Vagina (tissue), 2 donors: ENCODE measurements at regions of chr6 and their contacts with region 1.

Region 1: GRCh38 chr6:32796848-32797776 is 19.7 kb downstream of the HLA-DOB start:
- DNase-seq: no peak
- H3K4me3 ChIP-seq: no peak overlapping the region
- H3K27ac ChIP-seq: no peak overlapping the region
- H3K4me1 ChIP-seq: no peaks in the 10 kb centered on the region
- H3K27me3 ChIP-seq: no peaks in the 10 kb centered on the region
- CTCF ChIP-seq: peak; percentile 83 to 97 (median 87)
- POLR2A ChIP-seq: no peak

Region 2: GRCh38 chr6:32413427-32414047 is 383.6 kb before region 1 on chr6:
- intact Hi-C with region 1: loop called (anchors 10 kb)
- DNase-seq: no peak
- H3K4me3 ChIP-seq: no peak overlapping the region
- H3K27ac ChIP-seq: no peak overlapping the region
- H3K4me1 ChIP-seq: no peaks in the 10 kb centered on the region
- H3K27me3 ChIP-seq: no peaks in the 10 kb centered on the region
- CTCF ChIP-seq: peak; percentile 84 to 90 (median 89)
- POLR2A ChIP-seq: no peak

Region 3: GRCh38 chr6:32700391-32701040 is 96.6 kb before region 1 on chr6:
- intact Hi-C with region 1: loop called (anchors 10 kb)
- DNase-seq: no peak
- H3K4me3 ChIP-seq: no peak overlapping the region
- H3K27ac ChIP-seq: no peak overlapping the region
- H3K4me1 ChIP-seq: no peaks in the 10 kb centered on the region
- H3K27me3 ChIP-seq: no peaks in the 10 kb centered on the region
- CTCF ChIP-seq: peak in 2 of 3 experiments; percentile 45 to 59
- POLR2A ChIP-seq: no peak

Region 4: DNA sequence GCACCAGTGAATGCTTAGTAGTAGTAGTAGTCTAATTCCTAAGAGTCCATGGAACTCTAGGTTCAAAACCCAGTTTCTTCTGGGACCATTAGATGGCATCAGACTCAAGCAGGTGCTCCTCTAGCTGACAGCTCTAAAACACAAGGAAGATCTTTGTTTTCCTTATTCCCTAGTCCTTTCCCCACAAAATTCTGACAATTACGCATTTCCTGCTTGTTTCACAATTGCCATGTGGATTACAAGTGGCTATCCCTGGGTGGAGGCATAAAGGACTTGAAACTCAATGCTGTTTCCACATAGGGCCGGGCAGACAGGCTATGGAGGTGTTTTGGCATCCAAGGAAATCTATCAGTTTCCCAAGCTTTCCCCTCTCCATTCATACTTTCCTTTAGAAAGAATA is 28.9 kb after region 1 on chr6:
- intact Hi-C with region 1: loop called (anchors 1 kb)
- DNase-seq: no peak
- H3K4me3 ChIP-seq: no peak overlapping the region
- H3K27ac ChIP-seq: no peak overlapping the region
- H3K4me1 ChIP-seq: no peaks in the 10 kb centered on the region
- H3K27me3 ChIP-seq: no peaks in the 10 kb centered on the region
- CTCF ChIP-seq: peak in 2 of 3 experiments; percentile 9 to 47
- POLR2A ChIP-seq: no peak

Region 5: DNA sequence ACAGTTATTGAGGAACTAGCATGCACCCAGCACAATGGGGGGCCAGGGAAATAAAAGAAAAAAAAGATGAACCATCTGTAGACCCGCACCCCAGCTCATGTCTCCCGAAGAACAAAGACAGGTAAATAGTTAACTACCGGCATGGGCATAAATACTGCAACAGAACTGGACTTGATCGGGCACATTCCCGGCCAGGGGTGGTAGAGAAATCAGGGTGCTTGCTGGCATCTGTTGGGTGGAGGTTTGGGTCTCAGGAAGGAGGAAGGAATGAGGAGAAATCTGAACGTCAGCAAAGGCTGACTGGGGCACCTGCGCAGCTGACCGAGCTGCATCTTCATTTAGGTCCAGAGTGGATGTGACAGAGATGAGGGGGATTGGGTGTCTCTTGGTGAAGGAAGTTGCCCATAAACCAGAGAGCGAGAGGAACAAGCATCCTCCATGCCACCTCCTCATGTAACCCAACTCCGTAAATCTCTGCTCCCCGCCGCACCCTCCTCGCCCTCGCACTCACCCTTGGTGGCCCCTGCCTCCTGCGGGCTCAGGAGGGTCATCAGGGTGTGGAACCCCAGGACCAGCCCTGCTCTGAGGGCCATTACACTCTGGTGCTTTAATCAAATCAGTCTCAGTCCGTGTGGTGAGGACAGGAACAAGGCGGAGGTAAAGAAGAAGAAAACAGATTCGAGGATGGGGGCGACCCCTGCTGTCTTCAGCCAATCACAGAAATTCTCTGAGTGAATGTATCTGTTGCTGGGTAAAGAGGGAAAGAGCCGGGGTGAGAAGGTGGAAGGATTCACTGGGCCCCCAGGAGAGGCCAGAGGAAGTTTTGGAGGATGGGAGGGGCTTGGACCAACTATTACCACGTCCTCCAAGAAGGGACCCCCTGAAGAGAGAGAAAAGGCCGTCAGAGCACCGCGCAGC is 212.1 kb after region 1 on chr6 and contains the start of gene HLA-DOA:
- intact Hi-C with region 1: no loop called
- DNase-seq: no peak
- H3K4me3 ChIP-seq: peak within 1 kb of the TSS; percentile 10 to 31
- H3K27ac ChIP-seq: no peak within 1 kb of the TSS
- H3K4me1 ChIP-seq: peaks cover 6% of the 10 kb centered on the region
- H3K27me3 ChIP-seq: no peaks in the 10 kb centered on the region
- CTCF ChIP-seq: no peak
- POLR2A ChIP-seq: no peak
- total RNA-seq, gene HLA-DOA: 30.2 TPM